GM12878 (cell line): ENCODE measurements at regions of chr15 and their contacts with region 1.

Region 1: DNA sequence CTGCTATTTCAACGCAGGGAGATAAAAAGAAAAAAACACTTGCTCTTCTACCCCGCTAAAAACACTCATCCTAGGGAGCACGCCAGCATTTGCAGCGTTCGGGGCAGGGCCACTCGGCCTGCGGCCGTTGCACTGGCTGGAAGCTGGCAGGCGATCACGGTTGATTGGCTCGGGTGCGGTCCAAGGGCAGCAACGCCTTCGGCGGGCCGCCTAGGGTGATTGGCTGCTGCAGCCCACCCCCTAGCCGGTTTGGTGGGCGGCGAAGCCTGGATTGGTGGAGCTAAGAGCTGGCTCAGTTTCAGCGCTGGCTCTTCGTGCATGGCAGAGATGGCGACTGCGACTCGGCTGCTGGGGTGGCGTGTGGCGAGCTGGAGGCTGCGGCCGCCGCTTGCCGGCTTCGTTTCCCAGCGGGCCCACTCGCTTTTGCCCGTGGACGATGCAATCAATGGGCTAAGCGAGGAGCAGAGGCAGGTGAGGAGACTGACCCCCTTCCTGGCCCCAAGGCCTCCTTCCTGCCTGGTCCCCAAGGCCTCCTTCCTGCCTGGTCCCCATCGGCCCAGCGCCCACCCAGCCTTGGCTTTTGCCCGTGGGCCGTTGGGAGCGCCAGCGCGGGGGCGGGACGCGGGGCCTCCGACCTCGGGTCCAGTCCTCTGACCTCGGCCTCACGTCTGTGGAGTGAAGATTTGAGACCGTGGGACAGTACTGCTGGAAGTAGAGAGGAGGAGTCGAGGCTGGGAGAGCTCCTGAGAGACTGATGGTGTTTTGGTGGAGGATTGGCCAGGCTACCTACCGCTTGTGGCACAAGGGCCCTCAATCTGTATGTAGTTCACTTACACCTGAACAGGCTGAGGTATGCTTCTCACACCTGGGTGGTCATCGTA is at the start of gene IVD:
- DNase-seq: peak; percentile 75
- ATAC-seq: peak; percentile 96
- H3K4me3 ChIP-seq: peak within 1 kb of the TSS; percentile 92
- H3K27ac ChIP-seq: peak within 1 kb of the TSS; percentile 85
- H3K4me1 ChIP-seq: peaks cover 32% of the 10 kb centered on the region
- H3K27me3 ChIP-seq: no peaks in the 10 kb centered on the region
- CTCF ChIP-seq: no peak
- EP300 ChIP-seq: no peak
- POLR2A ChIP-seq: peak; percentile 98
- RAD21 ChIP-seq: no peak
- polyA plus RNA-seq, gene IVD: 5.3 to 8.2 TPM

Region 2: GRCh38 chr15:40069178-40070165 is 336.3 kb before region 1 on chr15:
- CTCF ChIA-PET with region 1: no interaction called
- POLR2A ChIA-PET with region 1: no interaction called
- RAD21 ChIA-PET with region 1: no interaction called
- SMC1A ChIA-PET with region 1: no interaction called
- in situ Hi-C with region 1: no loop called
- intact Hi-C with region 1: no loop called
- DNase-seq: no peak
- ATAC-seq: peak; percentile 88
- H3K4me3 ChIP-seq: no peak overlapping the region; the same call in 1 of the 2 replicates
- H3K27ac ChIP-seq: peak overlapping the region; percentile 66
- H3K4me1 ChIP-seq: peaks cover 36% of the 10 kb centered on the region
- H3K27me3 ChIP-seq: no peaks in the 10 kb centered on the region
- CTCF ChIP-seq: no peak
- EP300 ChIP-seq: no peak
- POLR2A ChIP-seq: peak; percentile 79
- RAD21 ChIP-seq: no peak

Region 3: DNA sequence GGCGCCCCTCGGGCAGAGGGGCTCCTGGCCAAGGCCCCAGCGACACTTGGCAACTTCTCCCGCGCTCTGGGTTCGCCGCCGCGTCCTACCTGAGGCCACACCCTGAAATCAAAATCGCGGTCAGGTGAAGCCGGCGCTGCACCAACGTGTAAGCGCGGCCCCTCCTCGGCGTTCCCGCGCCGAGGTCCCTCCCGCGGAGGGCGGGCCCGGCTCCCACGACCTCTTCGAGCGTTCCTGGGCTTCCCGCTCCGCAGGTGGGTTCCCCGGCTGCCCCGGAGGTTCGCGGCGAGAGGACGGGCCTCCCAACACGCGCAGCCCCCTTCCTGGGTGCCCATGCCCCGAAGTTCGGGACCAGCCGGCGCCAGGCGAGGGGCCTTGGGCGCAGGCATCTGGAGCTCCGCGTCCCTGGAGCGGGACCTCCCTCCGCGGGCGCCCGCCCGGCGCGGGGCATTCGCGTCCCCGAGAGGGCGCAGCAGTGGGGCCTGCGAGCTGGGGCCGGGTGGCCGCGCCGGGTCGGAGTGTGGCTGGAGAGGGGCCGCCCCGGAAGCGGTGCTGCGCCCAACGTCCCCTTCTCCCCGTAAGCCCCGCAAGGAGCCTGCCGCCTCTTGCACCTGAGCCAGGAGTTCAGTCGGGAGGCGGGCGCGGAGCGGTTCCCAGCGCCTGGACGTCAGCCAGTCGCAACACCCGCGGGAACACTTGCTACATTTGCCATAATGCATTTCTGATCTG is 153.1 kb before region 1 on chr15:
- CTCF ChIA-PET with region 1: no interaction called
- POLR2A ChIA-PET with region 1: no interaction called
- RAD21 ChIA-PET with region 1: no interaction called
- SMC1A ChIA-PET with region 1: no interaction called
- in situ Hi-C with region 1: no loop called
- intact Hi-C with region 1: no loop called
- DNase-seq: no peak
- ATAC-seq: peak; percentile 77
- H3K4me3 ChIP-seq: peak overlapping the region; percentile 58; the same call in 1 of the 2 replicates
- H3K27ac ChIP-seq: no peak overlapping the region
- H3K4me1 ChIP-seq: peaks cover 3% of the 10 kb centered on the region; the same call in 1 of the 2 replicates
- H3K27me3 ChIP-seq: peaks cover 0 to 9% of the 10 kb centered on the region in 2 experiments; a peak in 3 of 4 replicates
- CTCF ChIP-seq: no peak
- EP300 ChIP-seq: no peak
- POLR2A ChIP-seq: no peak
- RAD21 ChIP-seq: no peak

Region 4: GRCh38 chr15:40367686-40368611 is 37.8 kb before region 1 on chr15:
- CTCF ChIA-PET with region 1: interaction called, 47 read pairs
- POLR2A ChIA-PET with region 1: no interaction called
- RAD21 ChIA-PET with region 1: interaction called, 3 read pairs
- SMC1A ChIA-PET with region 1: interaction called, 5 read pairs
- in situ Hi-C with region 1: no loop called
- intact Hi-C with region 1: no loop called
- DNase-seq: peak; percentile 27
- ATAC-seq: peak; percentile 93
- H3K4me3 ChIP-seq: peak overlapping the region; percentile 2; the same call in 1 of the 2 replicates
- H3K27ac ChIP-seq: no peak overlapping the region
- H3K4me1 ChIP-seq: peaks cover 8% of the 10 kb centered on the region
- H3K27me3 ChIP-seq: peaks cover 3 to 5% of the 10 kb centered on the region in 2 experiments
- CTCF ChIP-seq: peak; percentile 67 to 88 (median 81)
- EP300 ChIP-seq: no peak
- POLR2A ChIP-seq: no peak; the same call in 1 of the 2 replicates
- RAD21 ChIP-seq: peak; percentile 54

Region 5: GRCh38 chr15:40382580-40383456 is 22.9 kb before region 1 on chr15 and contains the start of gene KNSTRN:
- CTCF ChIA-PET with region 1: interaction called, 4 read pairs
- POLR2A ChIA-PET with region 1: interaction called, 7 read pairs
- RAD21 ChIA-PET with region 1: interaction called, 7 read pairs
- SMC1A ChIA-PET with region 1: interaction called, 22 read pairs
- in situ Hi-C with region 1: no loop called
- intact Hi-C with region 1: no loop called
- DNase-seq: peak; percentile 63
- ATAC-seq: peak; percentile 99
- H3K4me3 ChIP-seq: peak within 1 kb of the TSS; percentile 90
- H3K27ac ChIP-seq: peak within 1 kb of the TSS; percentile 50
- H3K4me1 ChIP-seq: peaks cover 3% of the 10 kb centered on the region; the same call in 1 of the 2 replicates
- H3K27me3 ChIP-seq: no peaks in the 10 kb centered on the region
- CTCF ChIP-seq: no peak
- EP300 ChIP-seq: no peak
- POLR2A ChIP-seq: peak; percentile 82
- RAD21 ChIP-seq: no peak
- polyA plus RNA-seq, gene KNSTRN: 30.3 to 37.3 TPM

Region 6: DNA sequence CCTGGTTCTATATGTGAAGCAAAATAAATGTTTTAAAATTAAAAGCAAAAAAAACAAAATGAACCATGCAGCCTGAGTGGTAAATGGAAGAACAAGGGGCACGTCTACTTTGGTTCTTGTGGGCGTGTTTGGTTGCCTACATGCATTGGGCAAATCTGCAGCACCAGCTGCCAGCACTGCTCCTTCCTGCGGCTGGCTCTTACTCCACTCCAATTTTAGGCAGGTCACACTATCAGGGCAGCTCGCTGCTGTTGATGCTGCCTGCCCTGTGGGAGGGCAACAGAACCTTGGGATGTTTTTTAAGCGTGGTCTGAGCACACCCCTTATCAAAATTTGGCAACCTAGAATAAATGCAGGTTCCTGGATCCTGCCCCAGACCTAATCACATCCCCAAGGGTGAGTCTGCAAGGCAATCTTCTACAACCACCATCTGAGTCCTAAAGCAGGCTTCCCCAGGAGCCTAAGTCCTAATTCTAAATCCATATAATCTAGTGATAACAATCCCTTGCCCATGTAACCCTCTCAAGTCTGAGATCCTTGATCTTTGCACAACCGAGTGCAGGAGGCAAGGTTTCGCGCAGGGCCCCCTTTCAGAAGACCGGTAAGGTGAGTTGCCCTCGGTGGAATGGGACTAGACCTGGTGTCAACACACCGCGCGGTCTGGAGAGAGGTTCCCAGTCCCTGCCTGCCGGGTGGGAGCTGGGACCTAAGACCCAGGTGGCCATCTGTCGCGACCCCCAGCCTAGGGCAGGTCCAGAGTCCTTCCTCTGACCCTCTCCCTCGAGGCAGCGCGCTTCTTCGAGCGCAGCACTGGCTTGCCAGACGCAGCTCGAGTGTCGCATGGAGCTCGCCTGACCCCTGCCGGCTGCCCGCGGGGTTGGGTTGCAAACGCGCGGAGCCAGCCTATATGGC is 15.8 kb after region 1 on chr15:
- CTCF ChIA-PET with region 1: interaction called, 8 read pairs
- POLR2A ChIA-PET with region 1: interaction called, 6 read pairs
- RAD21 ChIA-PET with region 1: interaction called, 11 read pairs
- SMC1A ChIA-PET with region 1: interaction called, 6 read pairs
- in situ Hi-C with region 1: no loop called
- intact Hi-C with region 1: no loop called
- DNase-seq: no peak
- ATAC-seq: peak; percentile 99
- H3K4me3 ChIP-seq: no peak overlapping the region
- H3K27ac ChIP-seq: no peak overlapping the region
- H3K4me1 ChIP-seq: no peaks in the 10 kb centered on the region
- H3K27me3 ChIP-seq: no peaks in the 10 kb centered on the region
- CTCF ChIP-seq: peak; percentile 93 to 98 (median 97)
- EP300 ChIP-seq: no peak
- POLR2A ChIP-seq: peak; percentile 73
- RAD21 ChIP-seq: peak; percentile 95

Region 7: DNA sequence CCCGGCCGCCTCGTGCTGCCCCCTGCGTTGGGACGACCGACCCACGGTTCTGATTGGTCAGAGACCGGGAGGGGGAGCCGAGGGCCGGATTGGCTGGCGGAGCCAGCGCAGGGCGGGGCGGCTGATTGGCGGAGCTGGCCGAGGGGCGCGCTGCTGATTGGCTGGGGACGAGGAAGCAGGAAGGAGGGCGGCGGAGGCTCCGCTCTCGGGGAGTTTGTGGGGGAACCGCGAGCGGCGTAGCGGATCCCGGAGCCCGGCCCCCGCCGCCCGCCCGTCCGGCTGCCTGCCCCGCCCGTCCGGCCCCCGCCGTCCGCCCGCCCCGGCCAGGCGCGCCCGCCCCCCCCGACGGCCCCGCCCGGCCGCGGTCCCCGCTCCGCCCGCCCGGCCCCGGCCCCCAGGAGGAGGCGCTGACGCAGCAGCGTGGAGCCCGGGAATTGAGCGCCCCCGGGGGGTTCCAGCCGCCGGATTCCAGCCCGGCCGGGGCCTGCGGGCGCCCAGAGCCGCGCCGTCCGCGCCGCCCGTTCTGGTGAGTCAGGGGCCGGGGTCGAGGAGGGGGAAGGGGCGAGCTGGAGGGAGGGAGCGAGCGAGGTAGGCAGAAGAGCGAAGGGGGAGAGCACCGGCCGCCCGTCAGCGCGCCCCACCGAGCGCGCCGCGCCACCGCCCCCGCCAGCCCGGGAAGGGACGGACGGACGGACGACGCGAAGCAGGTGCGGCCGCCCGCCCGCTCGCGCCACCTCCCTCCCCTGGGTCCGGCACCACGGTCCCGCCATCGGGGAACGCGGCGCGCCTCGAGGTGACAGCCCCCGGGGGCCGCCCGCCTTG is 35.2 kb after region 1 on chr15 and contains the start of gene BAHD1:
- CTCF ChIA-PET with region 1: interaction called, 6 read pairs
- POLR2A ChIA-PET with region 1: interaction called, 12 read pairs
- RAD21 ChIA-PET with region 1: interaction called, 8 read pairs
- SMC1A ChIA-PET with region 1: no interaction called
- in situ Hi-C with region 1: no loop called
- intact Hi-C with region 1: no loop called
- DNase-seq: peak; percentile 76
- ATAC-seq: peak; percentile 92
- H3K4me3 ChIP-seq: peak within 1 kb of the TSS; percentile 86
- H3K27ac ChIP-seq: peak within 1 kb of the TSS; percentile 33; the same call in 1 of the 2 replicates
- H3K4me1 ChIP-seq: peaks cover 19% of the 10 kb centered on the region
- H3K27me3 ChIP-seq: peaks cover 11 to 19% of the 10 kb centered on the region in 2 experiments
- CTCF ChIP-seq: peak in 1 of 3 experiments; percentile 18; a peak in 2 of 6 replicates
- EP300 ChIP-seq: no peak
- POLR2A ChIP-seq: peak; percentile 78
- RAD21 ChIP-seq: 0 out of 2 replicates have a peak, but pooled peaks have one; percentile 21
- polyA plus RNA-seq, gene BAHD1: 0.21 to 0.88 TPM